ENCODE measurements at regions of chr1 and their contacts with region 1.

Region 1: DNA sequence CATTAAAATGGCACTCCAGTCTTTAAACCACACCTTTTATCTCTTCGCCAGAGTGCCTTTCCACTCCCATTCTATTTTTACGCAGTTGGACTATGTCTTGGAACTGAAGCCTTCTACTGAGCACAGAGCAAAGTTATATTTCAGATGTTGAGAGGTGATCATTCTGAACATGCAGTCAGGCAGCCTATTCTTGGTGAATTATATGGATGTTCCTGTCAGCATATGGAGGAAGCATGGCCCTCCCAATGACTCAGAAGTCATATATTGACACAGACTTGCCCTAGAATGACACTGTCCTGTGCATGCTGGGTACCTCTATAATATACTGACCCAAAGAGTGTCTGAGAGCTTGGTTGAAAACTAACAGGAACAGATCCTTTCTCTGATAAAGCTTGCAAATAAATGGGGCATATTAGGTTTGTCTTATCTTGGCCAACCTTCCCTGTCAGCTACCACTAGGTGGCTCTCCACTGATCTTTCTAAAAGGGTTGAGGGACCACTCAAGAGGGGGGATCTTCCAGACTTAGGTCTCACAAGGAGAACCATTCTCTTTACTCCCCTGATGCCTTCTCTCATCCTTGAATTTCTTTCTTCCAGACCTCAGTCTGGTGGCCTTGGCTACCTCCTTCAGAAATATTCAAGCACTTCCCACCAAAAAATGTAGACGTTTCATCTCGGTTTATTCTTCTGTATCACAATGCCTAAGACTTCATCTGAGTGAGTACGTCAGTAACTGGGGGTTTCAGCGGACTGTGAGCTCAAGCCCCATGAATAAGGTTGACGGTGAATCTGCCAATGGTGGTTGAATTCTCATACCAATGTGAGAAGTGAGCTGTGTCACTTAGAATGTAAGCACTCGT is 11.8 kb upstream of the ALG14 start:
- DNase-seq: peak; percentile 46 to 55
- ATAC-seq: peak; percentile 48 to 64; a peak in 3 of 6 replicates
- H3K4me3 ChIP-seq: no peak overlapping the region
- H3K27ac ChIP-seq: peak overlapping the region; percentile 36 to 81; a peak in 4 of 6 replicates
- H3K4me1 ChIP-seq: peaks cover 53% of the 10 kb centered on the region
- CTCF ChIP-seq: peak; percentile 49
- EP300 ChIP-seq: no peak
- POLR2A ChIP-seq: no peak
- RAD21 ChIP-seq: peak; percentile 27 to 45; a peak in 3 of 5 replicates

Region 2: GRCh38 chr1:95116580-95117206 is 32.1 kb after region 1 on chr1:
- CTCF ChIA-PET with region 1: interaction called, 16 read pairs
- POLR2A ChIA-PET with region 1: interaction called, 3 read pairs
- DNase-seq: peak; percentile 74 to 80
- ATAC-seq: peak; percentile 92 to 93
- H3K4me3 ChIP-seq: peak overlapping the region; percentile 99
- H3K27ac ChIP-seq: peak overlapping the region; percentile 97 to 100
- H3K4me1 ChIP-seq: peaks cover 33% of the 10 kb centered on the region
- CTCF ChIP-seq: peak; percentile 61
- EP300 ChIP-seq: no peak
- POLR2A ChIP-seq: no peak
- RAD21 ChIP-seq: peak; percentile 46 to 54; a peak in 4 of 5 replicates

Region 3: DNA sequence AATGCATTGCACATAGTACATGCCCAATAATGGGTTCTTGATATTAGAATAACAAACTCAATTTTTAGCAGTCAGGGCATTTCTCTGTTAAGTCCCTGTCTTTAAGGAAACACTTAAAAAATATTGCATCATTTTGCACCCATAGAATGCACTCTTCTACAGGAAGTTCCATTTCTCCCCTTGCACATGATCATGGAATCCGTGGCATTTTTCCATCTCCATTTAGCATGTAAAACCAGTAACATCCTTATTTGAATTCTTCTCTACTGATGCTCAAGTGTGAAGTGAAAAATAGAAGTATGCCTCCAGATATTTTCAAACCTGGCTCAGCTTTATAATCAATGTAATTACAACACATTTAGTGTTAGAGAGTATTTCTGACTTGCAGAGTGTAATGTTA is 342.2 kb after region 1 on chr1:
- CTCF ChIA-PET with region 1: no interaction called
- POLR2A ChIA-PET with region 1: no interaction called
- DNase-seq: no peak
- ATAC-seq: no peak
- H3K4me3 ChIP-seq: no peak overlapping the region
- H3K27ac ChIP-seq: no peak overlapping the region
- H3K4me1 ChIP-seq: no peaks in the 10 kb centered on the region
- CTCF ChIP-seq: no peak
- EP300 ChIP-seq: no peak
- POLR2A ChIP-seq: no peak
- RAD21 ChIP-seq: no peak